ENCODE measurements at regions of chr5 and their contacts with region 1.

Region 1: DNA sequence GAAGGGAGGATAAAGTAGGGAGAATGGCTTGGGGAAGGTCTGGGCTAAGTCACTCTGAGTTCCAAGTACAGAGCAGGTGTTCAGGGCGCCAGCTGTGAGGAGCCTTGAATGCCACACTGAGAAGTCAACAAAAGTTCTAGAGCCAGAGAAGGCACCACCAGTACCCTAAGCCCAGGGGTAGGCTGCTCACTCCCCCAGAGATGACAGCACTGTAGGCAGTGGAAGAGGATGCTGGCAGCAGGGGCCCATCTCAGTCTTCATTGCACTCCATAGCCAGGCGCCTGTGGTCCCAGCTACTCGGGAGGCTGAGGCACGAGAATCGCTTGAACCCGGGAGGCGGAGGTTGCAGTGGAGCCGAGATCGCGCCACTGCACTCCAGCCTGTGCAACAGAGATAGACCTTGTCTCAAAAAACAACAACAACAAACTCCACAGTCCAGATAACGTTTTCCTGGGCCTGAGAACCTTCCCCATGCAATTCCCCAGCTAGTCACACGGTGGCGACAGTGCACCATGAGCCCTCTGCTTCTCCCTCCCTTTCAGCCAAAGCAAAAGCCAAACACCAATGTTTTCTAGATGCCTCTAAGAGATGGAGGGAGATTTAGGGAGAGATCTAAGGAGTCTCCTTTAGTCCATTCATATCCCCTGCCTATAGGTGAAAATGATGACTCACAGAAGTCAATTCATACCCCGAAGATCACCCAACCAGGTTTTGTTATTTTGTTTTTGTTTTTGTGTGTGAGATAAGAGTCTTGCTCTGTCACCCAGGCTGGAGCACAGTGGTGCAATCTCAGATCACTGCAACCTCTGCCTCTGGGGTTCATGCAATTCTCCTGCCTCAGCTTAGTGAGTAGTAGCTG is 19.8 kb upstream of the NSD1 start:
- DNase-seq: peak; percentile 87
- ATAC-seq: peak; percentile 67
- H3K4me3 Mint-ChIP-seq: no peak overlapping the region
- H3K27ac Mint-ChIP-seq: peak overlapping the region; percentile 45
- H3K4me1 Mint-ChIP-seq: peaks cover 27% of the 10 kb centered on the region
- H3K27me3 Mint-ChIP-seq: no peaks in the 10 kb centered on the region

Region 2: DNA sequence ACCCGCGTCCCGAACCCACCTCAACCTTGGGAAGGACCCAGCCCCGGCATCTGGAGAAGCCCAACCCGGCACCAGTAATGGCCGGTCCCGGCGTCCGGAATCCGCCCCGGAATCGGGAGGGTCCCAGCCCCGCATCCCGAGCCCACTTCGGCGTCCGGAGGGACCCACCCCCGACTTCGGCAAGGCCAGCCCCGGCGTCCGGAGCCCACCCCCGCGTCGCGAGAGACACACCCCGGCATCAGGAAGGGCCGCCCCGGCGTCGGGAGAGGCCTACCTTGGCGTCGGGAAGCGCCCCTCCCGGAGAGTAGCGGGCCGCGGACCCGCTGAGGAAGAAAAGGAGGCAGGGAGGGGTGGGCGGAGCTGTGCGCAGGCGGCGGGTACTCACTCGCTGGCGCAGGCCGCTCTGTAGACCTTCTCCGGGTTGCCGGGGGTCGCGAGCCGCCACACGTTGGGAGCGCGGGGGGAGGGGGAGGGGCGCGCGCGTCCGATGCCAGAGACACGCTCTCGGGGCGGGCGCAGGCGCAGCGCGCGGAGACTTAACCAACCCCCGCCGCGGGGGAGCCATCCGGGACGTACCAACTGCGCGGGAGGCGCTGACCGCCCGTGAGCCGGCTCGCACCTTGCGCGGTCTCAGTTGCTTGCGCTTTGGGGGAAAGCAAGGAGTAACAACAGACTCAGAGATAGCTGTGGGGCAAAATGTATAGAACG is 107.4 kb before region 1 on chr5 and contains the start of gene UIMC1:
- CTCF ChIA-PET with region 1: no interaction called
- POLR2A ChIA-PET with region 1: no interaction called
- DNase-seq: peak; percentile 94
- ATAC-seq: peak; percentile 87
- H3K4me3 Mint-ChIP-seq: peak within 1 kb of the TSS; percentile 95
- H3K27ac Mint-ChIP-seq: peak within 1 kb of the TSS; percentile 97
- H3K4me1 Mint-ChIP-seq: peaks cover 25% of the 10 kb centered on the region
- H3K27me3 Mint-ChIP-seq: no peaks in the 10 kb centered on the region
- total RNA-seq, gene UIMC1: 49.4 to 53.0 TPM

Region 3: DNA sequence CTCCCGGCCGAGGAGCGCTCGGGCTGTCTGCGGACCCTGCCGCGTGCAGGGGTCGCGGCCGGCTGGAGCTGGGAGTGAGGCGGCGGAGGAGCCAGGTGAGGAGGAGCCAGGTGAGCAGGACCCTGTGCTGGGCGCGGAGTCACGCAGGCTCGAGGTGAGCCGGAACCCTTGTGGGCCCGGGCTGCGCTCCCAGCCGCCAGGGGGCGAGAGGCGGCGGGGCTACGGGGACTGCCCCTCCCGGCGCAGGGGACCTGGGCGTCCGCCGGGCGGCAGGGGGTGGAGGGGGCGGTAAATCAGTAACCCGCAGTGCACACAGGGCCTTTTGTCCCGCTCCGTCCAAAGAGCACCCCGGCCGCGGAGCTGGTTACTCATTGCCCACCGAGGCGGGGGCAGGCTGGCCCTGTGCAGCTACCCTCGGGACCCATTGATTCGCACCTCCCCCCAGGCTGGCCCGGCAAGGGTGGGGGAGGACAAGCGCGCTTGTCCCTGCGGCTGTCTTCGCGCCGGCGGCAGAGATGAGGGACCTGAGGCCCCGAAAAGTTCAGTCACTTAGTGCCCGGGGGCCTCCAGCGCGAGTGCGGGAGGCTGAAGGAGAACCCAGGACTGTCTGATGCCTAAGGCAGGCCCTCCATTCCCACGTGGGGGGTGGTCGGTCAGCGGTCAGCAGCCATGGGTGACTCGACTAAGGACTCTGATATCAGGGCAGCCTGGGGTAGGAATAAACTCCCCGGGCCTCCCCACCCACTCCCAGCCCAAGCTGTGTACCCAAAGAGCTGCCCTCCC is 26.7 kb before region 1 on chr5:
- CTCF ChIA-PET with region 1: interaction called, 25 read pairs
- POLR2A ChIA-PET with region 1: no interaction called
- DNase-seq: peak; percentile 62
- ATAC-seq: peak; percentile 86
- H3K4me3 Mint-ChIP-seq: no peak overlapping the region
- H3K27ac Mint-ChIP-seq: no peak overlapping the region
- H3K4me1 Mint-ChIP-seq: peaks cover 4% of the 10 kb centered on the region
- H3K27me3 Mint-ChIP-seq: peaks cover 36% of the 10 kb centered on the region

Region 4: GRCh38 chr5:177133091-177133852 is 19.5 kb after region 1 on chr5 and contains the start of gene NSD1:
- CTCF ChIA-PET with region 1: interaction called, 43 read pairs
- POLR2A ChIA-PET with region 1: interaction called, 5 read pairs
- DNase-seq: peak; percentile 91
- ATAC-seq: peak; percentile 71
- H3K4me3 Mint-ChIP-seq: peak within 1 kb of the TSS; percentile 92
- H3K27ac Mint-ChIP-seq: peak within 1 kb of the TSS; percentile 89
- H3K4me1 Mint-ChIP-seq: peaks cover 51% of the 10 kb centered on the region
- H3K27me3 Mint-ChIP-seq: no peaks in the 10 kb centered on the region
- total RNA-seq, gene NSD1: 91.8 to 98.4 TPM

Region 5: DNA sequence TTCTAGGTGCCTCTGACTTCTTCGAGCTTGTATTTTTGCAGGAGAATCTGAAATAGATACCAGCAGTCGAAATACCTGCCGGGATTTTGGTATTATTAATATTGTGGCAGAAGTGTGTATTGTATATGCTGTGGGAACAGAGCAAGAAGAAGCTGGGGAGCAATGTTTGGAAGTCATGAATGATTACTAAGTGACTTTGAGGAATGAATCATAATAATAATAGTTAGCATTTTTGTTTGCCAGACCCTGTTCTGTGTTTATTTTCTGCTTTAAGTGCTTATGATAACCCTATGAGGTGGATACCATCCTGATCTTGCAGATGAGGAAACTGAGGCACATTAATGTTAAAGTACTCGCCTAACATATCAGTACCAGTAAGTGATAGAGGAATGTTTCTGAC is 157.3 kb after region 1 on chr5:
- CTCF ChIA-PET with region 1: interaction called, 18 read pairs
- POLR2A ChIA-PET with region 1: no interaction called
- DNase-seq: no peak
- ATAC-seq: no peak
- H3K4me3 Mint-ChIP-seq: no peak overlapping the region
- H3K27ac Mint-ChIP-seq: no peak overlapping the region
- H3K4me1 Mint-ChIP-seq: no peaks in the 10 kb centered on the region
- H3K27me3 Mint-ChIP-seq: no peaks in the 10 kb centered on the region

Region 6: DNA sequence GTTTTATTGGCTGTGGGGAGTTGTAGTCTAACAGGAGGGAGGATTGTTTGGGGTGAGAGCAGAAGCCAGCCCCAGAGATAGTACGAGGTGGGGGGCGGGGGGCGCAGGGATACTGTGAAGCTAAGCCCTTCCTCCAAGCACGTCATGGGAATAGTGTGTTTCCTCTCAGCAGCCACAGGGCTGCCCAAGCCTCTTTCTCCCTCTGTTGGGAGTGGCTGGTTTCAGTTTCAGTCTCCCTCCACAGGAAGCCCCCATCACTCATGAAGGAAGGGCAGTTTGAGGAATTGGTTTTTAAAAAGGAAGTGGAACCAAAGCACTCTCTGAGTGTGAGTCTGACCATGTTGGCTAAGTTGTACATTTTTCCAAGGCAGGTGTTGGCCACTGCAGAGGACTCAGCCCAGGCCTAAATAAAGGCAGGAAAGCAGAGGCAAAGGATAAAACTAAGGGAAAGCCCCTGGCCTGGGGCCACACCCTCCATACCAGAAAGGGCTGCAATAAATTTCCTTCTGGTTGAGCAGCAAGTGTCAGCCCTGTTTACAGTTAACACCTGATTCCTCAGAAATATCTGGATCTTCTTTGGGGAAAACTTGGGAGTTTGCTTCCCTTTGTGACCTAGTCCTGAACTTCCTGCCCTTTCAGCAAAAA is 186.6 kb after region 1 on chr5:
- CTCF ChIA-PET with region 1: interaction called, 30 read pairs
- POLR2A ChIA-PET with region 1: no interaction called
- DNase-seq: peak; percentile 78
- ATAC-seq: peak; percentile 59
- H3K4me3 Mint-ChIP-seq: peak overlapping the region; percentile 75
- H3K27ac Mint-ChIP-seq: peak overlapping the region; percentile 95
- H3K4me1 Mint-ChIP-seq: peaks cover 87% of the 10 kb centered on the region
- H3K27me3 Mint-ChIP-seq: no peaks in the 10 kb centered on the region

Region 7: GRCh38 chr5:177317959-177318377 is 204.2 kb after region 1 on chr5:
- CTCF ChIA-PET with region 1: interaction called, 21 read pairs
- POLR2A ChIA-PET with region 1: no interaction called
- DNase-seq: peak; percentile 84
- ATAC-seq: peak; percentile 67
- H3K4me3 Mint-ChIP-seq: no peak overlapping the region
- H3K27ac Mint-ChIP-seq: no peak overlapping the region
- H3K4me1 Mint-ChIP-seq: peaks cover 44% of the 10 kb centered on the region
- H3K27me3 Mint-ChIP-seq: no peaks in the 10 kb centered on the region

Measured in activated CD8-positive, alpha-beta T cell treated with anti-CD3 and anti-CD28 coated beads, Interleukin-2, amount 10 ng/mL, durations not matched to agents 7 days and 5 days (primary cell).